ENCODE measurements at regions of chr3 and their contacts with region 1.

Region 1: GRCh38 chr3:82133070-82133606 is 371.7 kb upstream of the GBE1 start:
- DNase-seq: peak; percentile 77
- H3K4me3 ChIP-seq: no peak overlapping the region
- H3K27ac ChIP-seq: no peak overlapping the region
- H3K4me1 ChIP-seq: no peaks in the 10 kb centered on the region
- H3K27me3 ChIP-seq: no peaks in the 10 kb centered on the region

Region 2: DNA sequence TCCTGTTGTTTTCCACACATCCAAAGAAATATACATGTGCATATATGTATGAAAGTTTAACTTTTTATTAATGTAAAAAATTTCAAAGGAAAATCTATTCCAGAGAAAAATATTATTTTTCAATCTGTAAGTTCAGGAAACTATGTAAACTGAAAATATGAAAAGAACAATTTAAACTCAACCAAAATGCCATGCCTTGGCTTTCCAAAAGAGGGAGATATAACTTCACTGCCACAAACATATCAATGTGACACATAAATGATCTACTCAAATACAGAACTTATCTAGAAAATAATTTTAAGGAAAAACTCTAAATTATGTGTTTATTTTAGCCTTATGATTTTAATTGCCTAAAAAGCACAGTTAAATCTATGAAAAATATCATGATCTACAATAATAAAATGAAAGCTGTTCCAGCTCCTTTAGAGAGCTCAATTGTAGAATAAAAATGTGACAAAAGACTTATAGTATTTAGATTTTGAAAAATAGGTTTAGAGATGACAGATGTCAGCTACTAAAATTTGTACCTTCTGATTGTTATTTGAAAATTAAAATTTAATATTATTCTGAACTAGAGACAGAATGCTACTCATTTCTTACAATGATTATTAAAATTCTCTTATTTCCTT is 466.5 kb before region 1 on chr3:
- in situ Hi-C with region 1: loop called (anchors 25 kb)
- DNase-seq: peak; percentile 46
- H3K4me3 ChIP-seq: no peak overlapping the region
- H3K27ac ChIP-seq: no peak overlapping the region
- H3K4me1 ChIP-seq: 0 out of 2 replicates have a peak, but pooled peaks cover 5% of the 10 kb centered on the region
- H3K27me3 ChIP-seq: no peaks in the 10 kb centered on the region

Region 3: DNA sequence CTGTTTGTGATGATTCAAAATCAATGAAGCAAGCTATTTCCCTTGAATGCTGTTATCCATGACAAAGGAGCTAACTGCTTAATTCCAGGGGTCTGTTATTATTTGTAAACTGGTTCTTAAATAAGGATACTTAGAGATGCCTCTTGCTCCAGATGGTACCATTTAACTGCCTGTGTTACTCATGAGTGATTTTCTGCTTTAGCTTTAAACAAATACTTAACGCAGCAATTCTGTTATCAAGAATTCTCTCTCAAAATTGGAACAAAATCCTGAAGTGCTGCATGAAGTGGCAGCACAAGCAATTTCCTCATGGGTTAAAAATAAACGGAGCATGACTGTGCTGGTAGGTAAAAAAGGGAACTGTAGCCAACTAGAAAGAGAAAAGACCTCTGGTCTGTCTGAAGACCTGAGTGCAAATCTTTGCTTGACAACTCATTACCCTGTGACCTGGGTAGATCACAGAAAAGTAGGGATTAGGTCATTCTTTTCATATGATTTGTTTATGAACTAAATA is 309.2 kb before region 1 on chr3:
- in situ Hi-C with region 1: no loop called
- DNase-seq: peak; percentile 46
- H3K4me3 ChIP-seq: no peak overlapping the region
- H3K27ac ChIP-seq: no peak overlapping the region
- H3K4me1 ChIP-seq: peaks cover 7% of the 10 kb centered on the region; the same call in 1 of the 2 replicates
- H3K27me3 ChIP-seq: no peaks in the 10 kb centered on the region

Region 4: GRCh38 chr3:82259976-82260375 is 126.8 kb after region 1 on chr3:
- in situ Hi-C with region 1: no loop called
- DNase-seq: no peak
- H3K4me3 ChIP-seq: no peak overlapping the region
- H3K27ac ChIP-seq: no peak overlapping the region
- H3K4me1 ChIP-seq: no peaks in the 10 kb centered on the region
- H3K27me3 ChIP-seq: no peaks in the 10 kb centered on the region

Region 5: GRCh38 chr3:82641701-82642100 is 508.6 kb after region 1 on chr3:
- in situ Hi-C with region 1: no loop called
- DNase-seq: no peak
- H3K4me3 ChIP-seq: no peak overlapping the region
- H3K27ac ChIP-seq: no peak overlapping the region
- H3K4me1 ChIP-seq: no peaks in the 10 kb centered on the region
- H3K27me3 ChIP-seq: no peaks in the 10 kb centered on the region